Activated CD4-positive, alpha-beta T cell treated with anti-CD3 and anti-CD28 coated beads, Interleukin-2, amount 10 ng/mL, durations not matched to agents 24 days and 14 days (primary cell): ENCODE measurements at regions of chr6 and their contacts with region 1.

Region 1: GRCh38 chr6:111605100-111605751 is 452 bp downstream of the TRAF3IP2 start:
- DNase-seq: peak; percentile 78
- H3K4me3 Mint-ChIP-seq: peak overlapping the region; percentile 90
- H3K27ac Mint-ChIP-seq: peak overlapping the region; percentile 99
- H3K4me1 Mint-ChIP-seq: peaks cover 30% of the 10 kb centered on the region
- H3K27me3 Mint-ChIP-seq: no peaks in the 10 kb centered on the region

Region 2: DNA sequence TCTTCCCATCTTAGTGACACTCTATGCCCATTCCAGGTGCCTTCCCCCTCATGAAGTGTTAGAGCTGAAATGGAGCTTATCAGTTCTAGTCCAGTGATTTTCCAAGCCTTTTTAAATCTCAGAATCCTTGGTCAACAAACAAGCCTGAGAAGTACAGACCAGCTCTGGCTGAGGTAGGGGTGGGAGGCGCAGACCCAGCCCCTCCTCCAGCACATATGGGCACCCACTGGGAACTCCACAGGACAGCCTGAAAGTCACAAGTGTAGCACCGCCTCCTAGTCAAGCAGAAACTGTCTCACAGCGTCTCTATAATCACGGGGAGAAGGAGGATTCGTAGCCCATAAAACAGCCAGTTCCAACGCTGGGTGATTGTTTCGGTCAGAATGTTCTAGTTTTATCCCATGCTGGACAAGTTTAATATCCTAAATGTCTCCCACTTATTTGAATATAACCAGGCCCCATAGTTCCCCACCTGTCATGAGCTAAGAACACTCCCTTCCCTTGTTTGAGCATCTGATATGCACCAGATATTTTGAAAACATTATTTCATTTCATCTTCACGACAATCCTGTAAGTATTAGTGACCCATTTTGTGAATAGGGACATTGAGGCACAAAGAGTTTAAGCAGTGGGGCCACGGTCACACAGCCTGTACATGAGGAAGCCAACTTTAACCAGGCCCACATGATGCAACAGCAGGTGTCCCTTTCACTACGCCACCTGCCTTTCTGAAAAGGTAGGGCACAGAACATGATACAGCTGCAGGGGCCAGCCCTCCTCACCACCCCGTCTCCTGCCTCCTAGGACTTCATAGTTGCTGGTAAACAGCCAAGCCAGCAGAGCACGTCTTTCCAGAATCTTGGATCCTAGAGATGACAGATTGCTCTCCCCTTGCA is 39.7 kb before region 1 on chr6:
- intact Hi-C with region 1: loop called (anchors 1 kb)
- DNase-seq: peak; percentile 72
- H3K4me3 Mint-ChIP-seq: no peak overlapping the region
- H3K27ac Mint-ChIP-seq: peak overlapping the region; percentile 77
- H3K4me1 Mint-ChIP-seq: peaks cover 52% of the 10 kb centered on the region
- H3K27me3 Mint-ChIP-seq: no peaks in the 10 kb centered on the region

Region 3: GRCh38 chr6:111894272-111894671 is 289.0 kb after region 1 on chr6:
- intact Hi-C with region 1: no loop called
- DNase-seq: no peak
- H3K4me3 Mint-ChIP-seq: no peak overlapping the region
- H3K27ac Mint-ChIP-seq: no peak overlapping the region
- H3K4me1 Mint-ChIP-seq: no peaks in the 10 kb centered on the region
- H3K27me3 Mint-ChIP-seq: peaks cover 8% of the 10 kb centered on the region

Region 4: GRCh38 chr6:112735129-112735528 is 1129.9 kb after region 1 on chr6:
- intact Hi-C with region 1: no loop called
- DNase-seq: no peak
- H3K4me3 Mint-ChIP-seq: no peak overlapping the region
- H3K27ac Mint-ChIP-seq: no peak overlapping the region
- H3K4me1 Mint-ChIP-seq: no peaks in the 10 kb centered on the region
- H3K27me3 Mint-ChIP-seq: no peaks in the 10 kb centered on the region